WTC11 (cell line): ENCODE measurements at regions of chr1 and their contacts with region 1.

Region 1: GRCh38 chr1:206734499-206735142 is 36.0 kb upstream of the IL19 start:
- DNase-seq: peak; percentile 87
- ATAC-seq: peak; percentile 83
- H3K4me3 Mint-ChIP-seq: no peak overlapping the region
- H3K27ac Mint-ChIP-seq: no peak overlapping the region
- H3K4me1 Mint-ChIP-seq: peaks cover 11% of the 10 kb centered on the region
- H3K27me3 Mint-ChIP-seq: no peaks in the 10 kb centered on the region; the same call in 1 of the 2 replicates
- CTCF ChIP-seq: peak; percentile 87

Region 2: DNA sequence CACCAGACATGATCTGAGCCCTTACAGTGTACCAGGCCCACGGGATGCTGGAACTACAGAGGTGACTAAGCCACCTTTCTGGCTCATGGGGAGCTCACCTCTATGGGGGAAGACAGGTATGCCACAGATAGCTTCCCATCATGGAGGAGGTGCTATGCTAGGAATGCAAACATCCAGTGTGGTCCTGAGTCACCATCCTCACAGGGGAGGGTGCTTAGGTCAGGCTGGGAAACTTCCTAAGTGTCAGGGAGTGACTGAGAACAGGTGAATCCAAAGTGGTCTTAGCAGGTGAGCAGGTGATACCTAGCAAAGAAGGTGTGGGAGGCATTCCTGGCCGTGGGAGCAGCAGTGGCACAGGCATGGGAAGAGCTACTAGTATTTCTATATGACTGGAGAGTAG is 235.9 kb before region 1 on chr1:
- CTCF ChIA-PET with region 1: no interaction called
- POLR2A ChIA-PET with region 1: no interaction called
- DNase-seq: no peak
- ATAC-seq: peak; percentile 86
- H3K4me3 Mint-ChIP-seq: no peak overlapping the region
- H3K27ac Mint-ChIP-seq: no peak overlapping the region; the same call in 1 of the 2 replicates
- H3K4me1 Mint-ChIP-seq: peaks cover 11% of the 10 kb centered on the region; the same call in 1 of the 2 replicates
- H3K27me3 Mint-ChIP-seq: peaks cover 5% of the 10 kb centered on the region; the same call in 1 of the 2 replicates
- CTCF ChIP-seq: no peak

Region 3: DNA sequence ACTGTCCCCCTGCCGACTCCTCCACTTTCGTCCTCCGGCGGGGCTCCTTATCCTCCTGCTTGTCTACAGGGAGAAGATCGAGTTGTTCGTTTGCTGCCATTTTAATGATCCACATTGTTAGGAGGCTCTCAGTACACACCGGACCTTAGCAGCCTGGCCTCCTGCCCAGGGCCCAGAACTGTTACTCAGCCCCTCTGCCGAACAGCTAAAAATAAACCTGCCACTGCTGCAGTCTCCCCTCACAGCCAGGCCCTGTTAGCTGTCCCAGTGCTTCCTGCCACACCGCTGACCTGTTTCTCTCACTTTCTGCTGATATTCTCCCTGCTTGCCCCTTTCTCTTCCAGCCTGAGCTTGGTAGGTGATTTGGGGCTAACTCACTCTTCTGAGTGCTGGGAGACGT is 41.6 kb before region 1 on chr1:
- CTCF ChIA-PET with region 1: interaction called, 11 read pairs
- POLR2A ChIA-PET with region 1: no interaction called
- DNase-seq: no peak
- ATAC-seq: no peak
- H3K4me3 Mint-ChIP-seq: no peak overlapping the region
- H3K27ac Mint-ChIP-seq: no peak overlapping the region
- H3K4me1 Mint-ChIP-seq: peaks cover 73% of the 10 kb centered on the region
- H3K27me3 Mint-ChIP-seq: no peaks in the 10 kb centered on the region; the same call in 1 of the 2 replicates
- CTCF ChIP-seq: no peak

Region 4: DNA sequence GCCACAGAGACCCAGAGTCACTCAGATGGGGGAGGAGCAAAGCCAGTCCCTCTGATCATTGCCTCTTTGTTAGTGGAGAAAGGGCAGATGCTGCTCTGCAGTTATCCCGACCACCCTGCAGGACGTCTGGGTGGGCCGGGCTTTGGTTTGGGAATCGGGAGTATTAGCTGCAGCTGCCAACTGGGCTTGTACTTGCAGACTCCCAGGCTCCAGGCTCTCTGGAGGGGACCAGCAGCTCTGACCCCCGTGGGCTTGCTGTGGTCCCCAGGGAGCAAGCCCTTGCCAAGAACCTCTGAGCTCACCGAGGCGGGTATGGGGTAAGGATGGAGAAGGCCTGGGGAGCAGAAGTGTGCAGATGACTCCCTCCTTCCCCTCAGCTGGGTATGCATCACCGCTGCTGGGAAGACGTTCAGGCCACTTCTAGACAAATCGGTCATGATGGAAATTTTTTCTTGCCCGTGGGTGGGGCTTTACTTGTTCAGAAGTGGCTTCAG is 28.3 kb before region 1 on chr1:
- CTCF ChIA-PET with region 1: interaction called, 11 read pairs
- POLR2A ChIA-PET with region 1: no interaction called
- DNase-seq: no peak
- ATAC-seq: peak; percentile 50
- H3K4me3 Mint-ChIP-seq: no peak overlapping the region
- H3K27ac Mint-ChIP-seq: no peak overlapping the region
- H3K4me1 Mint-ChIP-seq: peaks cover 76% of the 10 kb centered on the region
- H3K27me3 Mint-ChIP-seq: no peaks in the 10 kb centered on the region
- CTCF ChIP-seq: no peak

Region 5: GRCh38 chr1:206770531-206771337 is 36.1 kb after region 1 on chr1 and contains the start of gene IL19:
- CTCF ChIA-PET with region 1: interaction called, 13 read pairs
- POLR2A ChIA-PET with region 1: no interaction called
- DNase-seq: no peak
- ATAC-seq: peak; percentile 62
- H3K4me3 Mint-ChIP-seq: no peak within 1 kb of the TSS
- H3K27ac Mint-ChIP-seq: no peak within 1 kb of the TSS
- H3K4me1 Mint-ChIP-seq: peaks cover 33% of the 10 kb centered on the region
- H3K27me3 Mint-ChIP-seq: peaks cover 4% of the 10 kb centered on the region
- CTCF ChIP-seq: no peak
- total RNA-seq, gene IL19: not detected in 3 replicates

Region 6: DNA sequence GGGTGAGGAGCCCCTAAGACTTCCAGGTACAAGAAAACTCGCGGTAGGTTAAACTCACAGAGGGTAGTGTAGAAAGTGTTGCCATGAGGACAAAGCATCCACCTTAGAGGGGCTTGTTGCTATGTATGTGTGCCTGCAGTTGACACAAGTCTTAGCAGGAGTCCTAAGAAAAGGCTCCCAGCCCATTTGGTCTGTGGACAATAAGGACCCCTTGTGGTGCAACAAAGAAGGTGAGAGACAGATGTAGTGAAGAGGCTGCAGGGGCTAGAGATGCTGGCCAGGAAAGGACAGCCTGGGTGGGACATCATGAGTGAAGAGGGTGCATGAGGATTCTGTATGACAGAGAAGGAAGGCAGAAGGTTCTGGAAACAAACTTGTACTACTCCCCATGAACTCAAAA is 74.0 kb after region 1 on chr1:
- CTCF ChIA-PET with region 1: interaction called, 16 read pairs
- POLR2A ChIA-PET with region 1: no interaction called
- DNase-seq: no peak
- ATAC-seq: peak; percentile 86
- H3K4me3 Mint-ChIP-seq: no peak overlapping the region
- H3K27ac Mint-ChIP-seq: no peak overlapping the region
- H3K4me1 Mint-ChIP-seq: no peaks in the 10 kb centered on the region
- H3K27me3 Mint-ChIP-seq: peaks cover 2% of the 10 kb centered on the region; the same call in 1 of the 2 replicates
- CTCF ChIP-seq: no peak

Region 7: DNA sequence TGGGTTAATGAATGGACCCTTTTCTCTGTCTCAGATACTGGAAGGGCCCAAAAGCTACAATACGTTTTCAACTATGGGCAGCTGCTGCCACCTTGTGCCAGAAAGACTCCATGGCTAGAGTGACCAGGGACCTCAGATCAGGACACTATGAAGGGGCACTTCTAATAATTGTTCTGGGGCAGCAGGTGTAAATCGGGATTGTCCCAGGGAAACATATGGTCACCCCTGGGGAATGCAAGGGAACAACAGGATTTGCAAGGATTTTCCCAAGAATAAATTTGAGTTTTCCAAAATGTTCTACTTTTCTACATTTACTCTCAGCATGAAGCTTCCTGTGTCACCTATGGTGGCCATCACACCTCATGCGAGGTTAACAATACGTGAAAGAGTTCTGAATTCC is 247.6 kb after region 1 on chr1:
- CTCF ChIA-PET with region 1: interaction called, 32 read pairs
- POLR2A ChIA-PET with region 1: no interaction called
- DNase-seq: peak; percentile 59
- ATAC-seq: peak; percentile 71
- H3K4me3 Mint-ChIP-seq: no peak overlapping the region
- H3K27ac Mint-ChIP-seq: no peak overlapping the region
- H3K4me1 Mint-ChIP-seq: peaks cover 39% of the 10 kb centered on the region
- H3K27me3 Mint-ChIP-seq: peaks cover 43% of the 10 kb centered on the region
- CTCF ChIP-seq: peak; percentile 21; the same call in 1 of the 2 replicates